ENCODE measurements at regions of chr17 and their contacts with region 1.

Region 1: DNA sequence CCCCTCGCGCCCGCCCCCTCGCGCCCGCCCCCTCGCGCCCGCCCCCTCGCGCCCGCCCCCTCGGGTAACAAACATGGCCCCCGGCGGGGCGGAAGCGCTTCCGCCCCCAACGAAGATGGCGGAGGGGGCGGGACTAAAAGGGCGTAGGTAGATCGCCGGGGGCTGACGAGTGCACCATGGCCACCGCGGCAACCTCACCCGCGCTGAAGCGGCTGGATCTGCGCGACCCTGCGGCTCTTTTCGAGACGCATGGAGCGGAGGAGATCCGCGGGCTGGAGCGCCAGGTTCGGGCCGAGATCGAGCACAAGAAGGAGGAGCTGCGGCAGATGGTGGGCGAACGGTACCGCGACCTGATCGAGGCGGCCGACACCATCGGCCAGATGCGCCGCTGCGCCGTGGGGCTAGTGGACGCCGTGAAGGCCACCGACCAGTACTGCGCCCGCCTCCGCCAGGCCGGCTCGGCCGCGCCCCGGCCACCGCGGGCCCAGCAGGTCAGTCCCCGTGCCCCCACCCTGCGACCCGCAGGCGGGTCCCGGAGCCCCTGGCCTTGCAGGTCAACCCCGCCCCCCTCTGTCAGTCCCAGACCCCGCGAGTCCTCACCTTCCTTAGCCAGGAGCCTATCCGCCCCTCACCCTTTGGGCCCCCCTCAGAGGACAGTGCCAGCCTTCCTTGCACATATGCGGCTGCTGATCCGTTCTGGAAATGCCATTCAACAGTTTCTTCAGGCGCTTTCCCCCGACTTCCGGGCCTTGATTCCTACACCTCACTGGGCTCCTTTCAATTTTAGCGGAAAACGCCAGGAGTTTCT is at the start of gene COG1:
- DNase-seq: peak; percentile 92 to 94
- ATAC-seq: peak; percentile 90
- H3K4me3 ChIP-seq: peak within 1 kb of the TSS; percentile 83 to 91
- H3K27ac ChIP-seq: peak within 1 kb of the TSS in 1 of 2 donors; percentile 94
- H3K4me1 ChIP-seq: peaks cover 0 to 3% of the 10 kb centered on the region in 2 donors
- H3K27me3 ChIP-seq: no peaks in the 10 kb centered on the region
- total RNA-seq, gene COG1: 36.0 to 43.4 TPM

Region 2: DNA sequence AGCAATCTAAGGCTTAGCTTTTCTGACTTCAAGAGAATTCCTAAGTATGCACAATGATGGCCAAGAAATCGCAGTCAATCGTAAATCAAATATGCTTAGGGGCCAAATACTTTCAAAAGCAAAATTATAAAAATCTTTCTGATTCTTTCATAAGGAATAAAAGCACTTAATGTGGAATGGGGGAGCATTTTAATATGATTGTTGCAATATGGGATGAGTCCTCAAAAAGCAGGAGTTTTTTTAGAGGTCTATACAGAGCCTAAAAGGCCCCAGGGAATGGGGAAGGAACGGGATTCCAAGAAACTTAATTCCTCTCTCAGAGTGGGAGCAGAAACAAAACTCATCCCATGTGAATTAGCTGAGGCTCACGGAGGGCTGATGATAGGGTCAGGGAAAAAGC is 85.9 kb before region 1 on chr17:
- intact Hi-C with region 1: no loop called
- DNase-seq: no peak
- ATAC-seq: no peak
- H3K4me3 ChIP-seq: no peak overlapping the region
- H3K27ac ChIP-seq: no peak overlapping the region
- H3K4me1 ChIP-seq: no peaks in the 10 kb centered on the region
- H3K27me3 ChIP-seq: no peaks in the 10 kb centered on the region

Region 3: GRCh38 chr17:73226556-73227172 is 33.6 kb after region 1 on chr17:
- intact Hi-C with region 1: loop called (anchors 2 to 5 kb)
- DNase-seq: no peak
- ATAC-seq: no peak
- H3K4me3 ChIP-seq: no peak overlapping the region
- H3K27ac ChIP-seq: no peak overlapping the region
- H3K4me1 ChIP-seq: peaks cover 0 to 8% of the 10 kb centered on the region in 2 donors
- H3K27me3 ChIP-seq: no peaks in the 10 kb centered on the region

Region 4: DNA sequence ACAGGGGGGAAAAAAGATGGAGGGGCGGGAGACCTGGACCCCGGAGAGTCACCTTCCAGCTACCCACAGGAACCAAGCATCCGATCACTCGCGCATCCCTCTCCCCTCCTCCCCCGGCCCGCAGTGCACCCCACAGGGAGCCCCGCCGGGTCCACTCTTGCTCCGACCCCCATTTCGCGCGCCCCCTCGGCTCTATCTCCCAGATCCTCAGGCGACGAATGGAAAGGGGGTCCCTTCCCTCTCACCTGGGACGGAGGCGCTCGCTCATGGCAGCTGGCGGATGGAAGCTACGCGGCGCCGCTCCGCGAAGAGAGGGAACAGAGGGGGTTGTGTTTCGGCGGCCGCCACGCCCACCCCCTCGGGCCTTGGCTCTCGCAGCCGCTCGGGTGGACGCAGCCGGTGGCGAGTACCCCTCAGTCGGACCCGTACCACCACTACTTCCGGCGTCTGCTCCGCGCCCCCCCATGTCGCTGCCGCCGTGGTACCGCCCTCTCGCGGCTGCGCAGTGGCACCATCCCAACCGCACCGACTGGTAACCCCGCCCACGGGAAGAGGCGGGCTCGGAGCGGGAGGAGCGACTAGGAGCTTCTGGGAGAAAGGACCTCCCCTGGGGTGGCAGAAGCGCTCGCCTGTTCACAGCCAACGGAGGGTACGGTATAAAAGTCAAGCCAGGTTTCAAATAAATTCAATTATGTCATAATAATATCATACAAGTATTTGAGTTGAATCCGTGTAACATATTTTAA is 38.9 kb after region 1 on chr17:
- intact Hi-C with region 1: loop called (anchors 2 to 5 kb)
- DNase-seq: peak; percentile 97 to 99
- ATAC-seq: peak; percentile 98
- H3K4me3 ChIP-seq: peak overlapping the region; percentile 95 to 97
- H3K27ac ChIP-seq: peak overlapping the region in 1 of 2 donors; percentile 49
- H3K4me1 ChIP-seq: peaks cover 0 to 8% of the 10 kb centered on the region in 2 donors
- H3K27me3 ChIP-seq: no peaks in the 10 kb centered on the region

Region 5: DNA sequence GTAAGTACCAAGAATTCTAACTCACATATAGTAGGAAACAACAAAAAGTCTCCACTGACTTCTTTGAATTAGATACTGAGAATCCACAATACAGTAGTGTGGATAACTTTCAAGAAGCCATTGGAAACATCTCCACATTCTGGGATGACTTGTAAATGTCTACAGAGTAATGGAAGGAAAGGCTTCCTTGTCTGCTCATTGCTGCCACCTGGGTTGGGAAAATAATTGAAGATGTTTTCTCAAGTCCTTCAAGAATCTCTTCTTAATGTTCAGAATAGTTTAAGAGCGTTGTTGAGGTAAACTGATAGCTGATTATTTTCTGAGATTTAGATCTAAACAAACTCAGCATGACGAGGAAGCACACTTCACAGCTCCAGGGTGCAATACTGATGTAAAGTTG is 54.6 kb after region 1 on chr17:
- intact Hi-C with region 1: no loop called
- DNase-seq: no peak
- ATAC-seq: no peak
- H3K4me3 ChIP-seq: no peak overlapping the region
- H3K27ac ChIP-seq: no peak overlapping the region
- H3K4me1 ChIP-seq: no peaks in the 10 kb centered on the region
- H3K27me3 ChIP-seq: no peaks in the 10 kb centered on the region

Region 6: DNA sequence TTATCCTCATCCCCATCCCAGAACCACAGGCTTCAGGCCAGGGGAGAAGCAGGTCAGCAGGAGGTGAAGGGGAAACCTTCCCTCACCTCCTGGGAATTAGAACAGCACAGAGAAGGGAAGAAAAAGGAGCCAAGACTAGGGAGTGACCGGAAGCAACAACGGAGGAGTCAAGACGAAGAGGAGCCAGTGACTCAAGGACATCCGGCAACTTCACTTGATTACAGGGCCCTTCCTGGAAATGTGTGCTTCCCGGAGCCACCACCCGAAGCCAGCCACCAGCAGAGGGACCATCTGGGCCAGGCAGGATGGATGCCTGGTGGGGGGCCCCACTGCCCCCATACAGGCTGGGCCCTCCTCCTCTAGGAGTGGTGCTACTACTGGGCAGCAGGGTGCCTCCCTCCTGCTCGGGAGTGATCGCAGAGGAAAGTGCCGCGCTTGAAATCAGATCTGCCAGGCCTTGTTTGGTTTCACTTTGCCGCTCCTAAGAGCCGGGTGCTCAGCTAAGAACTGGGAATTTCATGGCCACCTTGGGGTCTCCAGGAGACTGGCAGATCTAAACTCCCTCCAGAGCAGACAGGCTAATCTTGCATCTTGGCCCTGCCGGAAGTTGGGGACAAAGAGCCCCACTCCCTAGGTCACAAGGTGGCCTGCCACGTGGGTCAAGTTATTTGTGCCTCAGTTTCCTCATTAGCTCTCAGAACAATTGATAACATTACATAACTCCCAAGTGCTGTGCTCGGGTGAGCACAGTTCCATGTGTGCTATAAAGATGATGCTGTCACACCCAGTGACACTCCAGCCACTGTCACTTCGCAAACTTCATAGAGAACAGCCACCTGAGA is 112.1 kb after region 1 on chr17:
- intact Hi-C with region 1: loop called in 1 of 2 experiments (anchors 2 kb)
- DNase-seq: peak; percentile 85 to 88
- ATAC-seq: peak; percentile 74
- H3K4me3 ChIP-seq: peak overlapping the region in 1 of 2 donors; percentile 0
- H3K27ac ChIP-seq: peak overlapping the region; percentile 88 to 98
- H3K4me1 ChIP-seq: peaks cover 3 to 6% of the 10 kb centered on the region in 2 donors
- H3K27me3 ChIP-seq: no peaks in the 10 kb centered on the region

Region 7: DNA sequence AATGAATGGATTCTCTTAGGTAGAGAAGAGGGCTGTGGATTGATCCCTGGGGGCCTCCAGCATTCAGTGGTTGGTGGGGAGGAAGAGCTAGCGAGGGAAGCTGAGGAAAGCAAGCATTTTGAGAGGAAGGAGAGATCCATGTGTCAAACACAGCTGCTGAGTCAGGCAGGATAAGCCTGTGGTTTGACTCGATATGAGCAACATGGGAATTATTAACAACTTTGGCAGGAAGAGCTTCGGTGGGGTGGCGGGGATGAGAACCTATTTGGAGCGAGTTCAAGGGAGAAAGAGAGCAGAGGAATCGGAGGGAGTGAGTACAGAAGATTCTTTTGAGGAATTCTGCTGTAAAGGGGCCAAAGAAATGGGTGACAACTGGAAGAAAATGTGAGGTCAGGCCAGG is 178.2 kb after region 1 on chr17:
- intact Hi-C with region 1: loop called in 1 of 2 experiments (anchors 5 kb)
- DNase-seq: no peak
- ATAC-seq: no peak
- H3K4me3 ChIP-seq: no peak overlapping the region
- H3K27ac ChIP-seq: no peak overlapping the region
- H3K4me1 ChIP-seq: no peaks in the 10 kb centered on the region
- H3K27me3 ChIP-seq: no peaks in the 10 kb centered on the region

Measured in aorta (tissue), 5 donors.